ENCODE measurements at regions of chr6 and their contacts with region 1.

Region 1: GRCh38 chr6:13328076-13328874 is at the start of gene TBC1D7:
- DNase-seq: peak; percentile 94 to 95 (median 95)
- ATAC-seq: peak; percentile 96 to 98 (median 98)
- H3K4me3 ChIP-seq: peak within 1 kb of the TSS; percentile 70 to 85 (median 72)
- H3K27ac ChIP-seq: peak within 1 kb of the TSS; percentile 79 to 87 (median 87)
- H3K4me1 ChIP-seq: peaks cover 0 to 6% (median 0%) of the 10 kb centered on the region in 4 donors
- H3K27me3 ChIP-seq: no peaks in the 10 kb centered on the region
- CTCF ChIP-seq: peak in 1 of 4 donors; percentile 18
- POLR2A ChIP-seq: peak; percentile 96
- total RNA-seq, gene TBC1D7: 7.8 to 16.0 (median 9.7) TPM

Region 2: DNA sequence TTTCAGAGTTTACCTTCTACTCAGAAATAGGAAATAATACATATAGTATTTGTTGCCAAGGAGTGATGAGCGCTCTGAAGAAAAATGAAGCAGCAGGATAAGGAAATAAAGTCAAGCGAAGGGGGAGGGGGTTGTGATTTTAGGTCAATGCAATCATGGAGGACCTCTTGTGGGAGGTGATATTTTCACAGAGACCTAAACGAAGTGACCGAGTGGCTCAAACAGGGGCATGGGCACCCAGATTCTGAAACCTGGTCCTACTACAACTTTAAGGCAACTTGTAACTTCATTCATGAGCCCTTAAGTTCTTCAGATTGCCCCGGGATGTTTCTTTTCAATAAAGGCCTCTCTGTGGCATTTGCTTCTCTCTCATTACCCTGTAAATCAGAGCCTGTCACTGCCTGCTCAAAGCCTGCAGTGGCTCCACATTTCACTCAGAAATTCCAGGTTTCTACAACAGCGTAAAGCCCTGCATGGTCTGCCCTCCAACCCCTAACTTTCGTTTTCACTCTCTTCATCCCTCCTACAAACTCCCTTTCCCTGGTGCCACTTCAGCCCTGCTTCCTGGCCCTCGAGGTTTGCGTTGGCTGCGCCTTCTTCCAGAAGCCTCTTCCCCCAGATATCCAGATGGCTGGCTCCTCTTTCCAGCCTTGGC is 162.6 kb before region 1 on chr6:
- intact Hi-C with region 1: no loop called
- DNase-seq: no peak
- ATAC-seq: no peak
- H3K4me3 ChIP-seq: no peak overlapping the region
- H3K27ac ChIP-seq: no peak overlapping the region
- H3K4me1 ChIP-seq: no peaks in the 10 kb centered on the region
- H3K27me3 ChIP-seq: no peaks in the 10 kb centered on the region
- CTCF ChIP-seq: no peak
- POLR2A ChIP-seq: no peak

Region 3: DNA sequence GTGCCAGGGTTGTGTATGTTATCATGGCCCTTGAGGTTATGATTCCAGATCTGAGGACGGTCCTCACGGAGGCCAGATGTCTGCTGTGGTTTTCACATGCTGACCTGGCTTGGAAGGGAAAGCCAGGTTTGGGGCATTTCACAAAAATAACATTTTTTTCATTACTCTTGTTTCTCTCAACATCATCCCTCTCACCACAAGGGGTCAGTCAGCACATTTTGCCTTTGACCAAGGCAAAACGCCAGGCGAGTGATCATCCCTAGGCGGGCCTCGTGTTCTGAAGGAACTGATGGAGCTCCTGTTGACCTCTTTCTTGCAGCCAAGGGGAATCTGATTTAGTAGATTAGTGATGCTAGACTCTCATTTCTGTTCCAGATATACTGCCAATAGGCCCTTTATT is 133.4 kb before region 1 on chr6:
- intact Hi-C with region 1: loop called (anchors 10 kb)
- DNase-seq: peak; percentile 62 to 69 (median 66)
- ATAC-seq: peak; percentile 74 to 87 (median 81)
- H3K4me3 ChIP-seq: no peak overlapping the region
- H3K27ac ChIP-seq: no peak overlapping the region
- H3K4me1 ChIP-seq: no peaks in the 10 kb centered on the region
- H3K27me3 ChIP-seq: no peaks in the 10 kb centered on the region
- CTCF ChIP-seq: peak; percentile 48 to 66 (median 58)
- POLR2A ChIP-seq: no peak

Region 4: GRCh38 chr6:13466304-13467215 is 138.3 kb after region 1 on chr6:
- intact Hi-C with region 1: no loop called
- DNase-seq: no peak
- ATAC-seq: peak in 1 of 4 donors; percentile 5
- H3K4me3 ChIP-seq: no peak overlapping the region
- H3K27ac ChIP-seq: no peak overlapping the region
- H3K4me1 ChIP-seq: peaks cover 0 to 23% (median 0%) of the 10 kb centered on the region in 4 donors
- H3K27me3 ChIP-seq: no peaks in the 10 kb centered on the region
- CTCF ChIP-seq: no peak
- POLR2A ChIP-seq: no peak

Measured in right lobe of liver (tissue), 6 donors.